SK-N-SH (cell line): ENCODE measurements at regions of chr11 and their contacts with region 1.

Region 1: DNA sequence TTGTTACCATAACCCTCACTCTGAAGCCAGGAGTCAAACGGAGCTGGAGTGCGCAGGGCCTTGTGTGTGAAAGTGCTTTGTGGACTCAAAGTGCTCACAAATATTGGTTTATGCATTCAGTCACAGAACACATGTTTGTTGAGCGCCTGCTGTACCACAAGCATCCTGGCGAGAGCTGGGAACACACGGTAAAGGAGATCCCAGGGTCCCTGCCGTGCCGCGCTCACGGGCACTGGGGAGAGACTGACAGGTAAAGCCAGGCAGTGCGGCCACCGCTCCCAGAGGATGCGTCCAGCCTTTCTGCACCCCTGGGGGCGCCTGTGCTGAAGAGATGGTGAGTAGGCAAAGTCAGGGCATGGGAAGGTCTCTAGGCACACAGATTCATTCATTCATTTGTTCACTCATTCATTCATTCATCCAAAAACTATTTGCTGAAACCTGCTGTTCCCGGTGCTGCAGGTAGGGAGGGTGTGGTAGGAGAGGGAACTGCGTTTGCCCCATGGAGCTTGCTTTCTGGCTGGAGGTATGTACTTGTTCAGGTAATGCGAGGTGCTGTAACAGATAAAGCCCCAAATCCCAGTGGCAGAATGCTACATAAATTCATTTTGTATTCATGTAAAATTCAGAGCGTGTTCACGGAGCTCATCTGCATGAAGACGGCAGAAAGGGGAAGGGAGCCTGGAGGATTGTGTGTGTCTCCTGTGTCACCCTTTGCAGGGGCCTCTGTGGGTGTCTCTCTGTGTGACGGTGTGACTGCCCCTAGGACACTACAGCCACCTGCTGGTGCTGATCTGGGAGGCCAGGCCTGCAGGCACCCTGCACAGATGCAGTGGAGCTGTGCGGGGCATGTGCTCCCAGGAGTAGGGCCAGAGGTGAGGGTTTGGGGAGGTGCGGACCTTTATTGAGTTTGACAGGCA is 167.0 kb upstream of the B3GAT1 start:
- DNase-seq: peak; percentile 64
- H3K4me3 ChIP-seq: no peak overlapping the region
- H3K27ac ChIP-seq: no peak overlapping the region
- H3K4me1 ChIP-seq: peaks cover 0 to 18% of the 10 kb centered on the region in 2 experiments; a peak in 1 of 4 replicates
- H3K27me3 ChIP-seq: no peaks in the 10 kb centered on the region
- CTCF ChIP-seq: no peak
- EP300 ChIP-seq: no peak
- RAD21 ChIP-seq: peak; percentile 60

Region 2: DNA sequence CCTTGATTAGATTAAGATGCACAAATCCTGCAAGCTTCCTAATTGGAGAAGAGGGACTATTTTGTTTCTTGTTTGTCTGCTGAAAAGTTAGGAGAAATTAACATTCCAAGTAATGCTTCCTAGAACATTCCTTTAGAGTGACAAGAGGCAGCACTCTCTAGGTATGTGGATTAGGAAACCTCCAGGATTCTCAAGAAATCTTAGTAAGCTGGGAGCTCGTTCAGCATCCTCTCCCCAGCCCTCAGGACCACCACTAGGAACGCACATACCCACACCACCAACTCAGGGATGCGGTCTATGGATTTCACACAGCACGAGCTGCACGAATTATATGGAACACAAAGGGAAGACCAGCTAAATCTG is 408.2 kb before region 1 on chr11:
- CTCF ChIA-PET with region 1: no interaction called
- POLR2A ChIA-PET with region 1: no interaction called
- DNase-seq: no peak
- H3K4me3 ChIP-seq: no peak overlapping the region
- H3K27ac ChIP-seq: no peak overlapping the region
- H3K4me1 ChIP-seq: no peaks in the 10 kb centered on the region
- H3K27me3 ChIP-seq: no peaks in the 10 kb centered on the region
- CTCF ChIP-seq: no peak
- EP300 ChIP-seq: no peak
- RAD21 ChIP-seq: no peak

Region 3: DNA sequence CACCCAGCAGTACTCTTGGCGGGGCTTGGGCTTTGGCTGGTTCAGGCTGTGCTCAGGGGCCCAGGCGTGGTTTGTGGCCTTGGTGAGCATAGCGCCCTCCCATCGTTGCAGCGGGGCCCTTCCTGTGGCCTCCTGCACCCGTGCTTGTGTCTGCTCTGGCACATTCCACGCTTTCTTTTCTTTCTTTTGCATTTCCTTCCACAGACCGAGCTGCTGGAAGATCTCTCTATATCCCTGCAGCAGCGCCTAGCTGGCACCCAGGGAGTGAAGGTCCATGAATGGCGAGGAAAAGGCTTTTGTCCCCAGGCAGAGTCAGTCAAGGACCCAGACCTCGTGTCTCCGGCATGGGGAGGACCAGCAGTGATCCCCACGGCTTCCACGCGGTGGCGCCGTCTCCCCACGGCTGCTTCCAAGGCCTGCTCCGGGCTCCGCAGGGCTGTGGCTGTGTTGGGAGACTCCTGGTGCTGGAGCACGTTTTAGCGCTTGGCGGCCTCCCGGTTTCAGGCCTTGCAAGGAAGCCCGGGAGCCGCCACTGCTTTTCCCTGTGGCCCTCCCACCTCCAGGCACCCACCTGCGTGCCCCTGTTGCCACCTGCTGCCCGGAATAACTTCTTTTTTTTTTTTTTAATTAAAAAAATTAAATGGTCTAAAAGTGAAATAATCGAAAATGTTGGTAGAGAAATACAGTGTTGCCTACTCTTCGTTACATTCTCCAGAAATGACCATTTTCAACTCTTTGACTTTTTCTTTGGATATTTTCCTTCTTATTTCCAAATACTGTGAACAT is 218.8 kb before region 1 on chr11:
- CTCF ChIA-PET with region 1: interaction called, 13 read pairs
- POLR2A ChIA-PET with region 1: no interaction called
- DNase-seq: peak; percentile 98
- H3K4me3 ChIP-seq: no peak overlapping the region
- H3K27ac ChIP-seq: no peak overlapping the region
- H3K4me1 ChIP-seq: no peaks in the 10 kb centered on the region; a peak in 1 of 4 replicates
- H3K27me3 ChIP-seq: no peaks in the 10 kb centered on the region
- CTCF ChIP-seq: peak; percentile 76
- EP300 ChIP-seq: no peak
- RAD21 ChIP-seq: peak; percentile 99